ENCODE measurements at regions of chr11 and their contacts with region 1.

Region 1: DNA sequence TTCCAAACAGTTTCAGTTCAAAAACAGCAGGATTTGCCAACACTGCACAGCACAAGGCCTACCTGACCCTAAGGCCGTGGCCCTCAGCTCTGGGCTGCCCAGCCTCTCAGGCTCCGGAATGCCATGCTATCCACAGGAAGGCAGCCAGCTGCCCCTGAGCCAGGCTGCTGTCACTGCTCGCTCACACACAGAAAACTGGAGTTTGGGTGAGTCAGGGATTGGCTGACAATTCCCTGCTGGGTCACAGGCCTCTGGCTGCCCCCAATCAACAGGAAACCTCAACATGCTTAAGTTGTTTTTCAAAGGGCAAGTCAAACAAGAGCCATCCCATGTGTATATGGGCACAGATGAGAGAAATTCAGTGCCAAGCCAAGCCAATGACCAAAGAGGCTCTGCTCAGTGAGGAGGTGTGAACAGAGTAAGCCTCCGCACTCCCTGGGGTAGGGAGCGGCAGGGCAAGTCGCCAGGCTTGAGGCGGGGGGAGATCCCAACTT is 50.2 kb downstream of the RPL27A start:
- DNase-seq: no peak
- H3K27ac ChIP-seq: peak overlapping the region; percentile 66
- CTCF ChIP-seq: no peak

Region 2: DNA sequence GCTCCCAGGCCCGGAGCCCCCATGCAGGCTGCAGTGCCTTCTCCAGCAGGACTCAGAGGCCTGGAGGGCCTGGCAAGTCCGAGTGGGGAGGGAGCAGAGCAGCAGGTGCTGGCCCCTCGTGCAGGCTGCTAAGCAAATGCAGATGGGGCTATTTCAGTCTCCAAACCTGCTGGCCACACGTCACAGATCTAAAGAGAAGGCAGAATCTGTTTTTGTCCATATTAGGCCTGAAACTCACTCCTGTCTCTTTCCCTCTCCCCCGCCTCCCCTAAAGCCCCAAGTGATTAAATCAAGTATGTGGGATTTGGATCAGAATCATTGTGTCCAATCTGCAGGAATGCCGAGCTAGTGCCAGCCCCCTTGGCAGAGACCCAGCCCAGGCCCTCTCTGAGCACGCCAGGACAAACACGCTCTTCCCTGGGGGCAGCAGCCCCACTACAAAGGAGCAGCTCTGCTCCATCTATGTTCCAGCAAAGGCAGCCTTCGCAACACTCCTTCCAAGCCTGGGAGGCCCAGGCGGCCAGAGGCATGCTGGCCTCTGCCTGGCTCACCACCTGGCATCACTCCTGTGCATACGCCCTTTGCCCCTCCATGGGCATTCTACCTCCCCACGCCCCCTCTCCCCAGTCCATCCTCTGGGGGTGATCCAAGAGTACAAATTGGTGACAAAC is 23.7 kb before region 1 on chr11:
- CTCF ChIA-PET with region 1: no interaction called
- POLR2A ChIA-PET with region 1: no interaction called
- DNase-seq: no peak
- H3K27ac ChIP-seq: peak overlapping the region; percentile 25
- CTCF ChIP-seq: no peak

Region 3: GRCh38 chr11:8863838-8864237 is 131.0 kb after region 1 on chr11:
- CTCF ChIA-PET with region 1: interaction called, 11 read pairs
- POLR2A ChIA-PET with region 1: no interaction called
- DNase-seq: no peak
- H3K27ac ChIP-seq: no peak overlapping the region
- CTCF ChIP-seq: no peak

Region 4: DNA sequence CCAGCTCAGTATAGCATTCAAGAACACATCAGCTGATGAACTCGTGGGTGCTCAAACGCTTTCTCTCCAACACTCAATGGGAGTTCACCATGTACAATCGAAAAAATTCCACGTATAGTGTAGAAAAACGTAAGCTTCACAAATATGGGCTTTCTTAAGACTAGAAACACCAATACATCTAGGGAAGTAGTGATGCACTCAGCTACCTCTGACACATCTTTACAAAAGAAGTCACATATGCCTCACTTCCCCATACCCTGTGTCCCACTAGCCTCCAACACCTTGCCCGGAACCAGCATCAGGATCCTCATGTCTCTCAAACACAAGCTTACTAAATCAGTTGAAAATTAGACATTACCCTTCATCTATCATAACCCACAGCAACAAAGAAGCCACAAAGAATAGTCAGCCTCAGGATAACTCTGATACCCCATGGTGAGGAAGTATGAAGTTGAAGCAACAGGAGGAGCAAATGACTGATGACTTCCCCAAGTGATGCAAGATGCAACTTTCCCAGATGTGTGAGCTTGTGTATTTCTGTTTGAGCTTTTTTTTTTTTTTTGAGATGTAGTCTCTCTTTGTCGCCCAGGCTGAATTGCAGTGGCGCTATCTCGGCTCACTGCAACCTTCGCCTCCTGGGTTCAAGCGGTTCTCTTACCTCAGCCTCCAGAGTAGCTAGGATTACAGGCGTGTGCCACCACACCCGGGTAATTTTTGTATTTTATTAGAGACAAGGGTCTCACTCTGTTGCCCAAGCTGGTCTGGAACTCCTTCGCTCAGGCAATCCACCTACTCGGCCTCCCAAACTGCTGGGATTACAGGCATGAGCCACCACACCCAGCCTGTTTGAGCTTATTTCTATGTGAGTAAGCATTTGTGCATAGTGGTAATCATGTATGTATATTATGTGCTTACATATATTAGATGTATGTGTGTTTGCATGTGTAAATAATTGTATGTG is 540.9 kb after region 1 on chr11:
- CTCF ChIA-PET with region 1: no interaction called
- POLR2A ChIA-PET with region 1: no interaction called
- DNase-seq: no peak
- H3K27ac ChIP-seq: no peak overlapping the region
- CTCF ChIP-seq: no peak